ENCODE measurements at regions of chr18 and their contacts with region 1.

Region 1: GRCh38 chr18:72223733-72224132 is 320.4 kb downstream of the CBLN2 start:
- DNase-seq: no peak
- H3K4me3 ChIP-seq: no peak overlapping the region
- H3K27ac ChIP-seq: no peak overlapping the region
- H3K4me1 ChIP-seq: no peaks in the 10 kb centered on the region
- H3K27me3 ChIP-seq: no peaks in the 10 kb centered on the region
- CTCF ChIP-seq: no peak
- EP300 ChIP-seq: no peak
- POLR2A ChIP-seq: no peak

Region 2: GRCh38 chr18:71913641-71914040 is 310.1 kb before region 1 on chr18:
- in situ Hi-C with region 1: no loop called
- intact Hi-C with region 1: no loop called
- DNase-seq: no peak
- H3K4me3 ChIP-seq: no peak overlapping the region
- H3K27ac ChIP-seq: no peak overlapping the region
- H3K4me1 ChIP-seq: no peaks in the 10 kb centered on the region
- H3K27me3 ChIP-seq: no peaks in the 10 kb centered on the region
- CTCF ChIP-seq: no peak
- EP300 ChIP-seq: no peak
- POLR2A ChIP-seq: no peak

Region 3: GRCh38 chr18:72206814-72207213 is 16.9 kb before region 1 on chr18:
- in situ Hi-C with region 1: no loop called
- intact Hi-C with region 1: loop called (anchors 1 kb)
- DNase-seq: no peak
- H3K4me3 ChIP-seq: no peak overlapping the region
- H3K27ac ChIP-seq: no peak overlapping the region
- H3K4me1 ChIP-seq: no peaks in the 10 kb centered on the region
- H3K27me3 ChIP-seq: no peaks in the 10 kb centered on the region
- CTCF ChIP-seq: no peak
- EP300 ChIP-seq: no peak
- POLR2A ChIP-seq: no peak